Activated CD4-positive, alpha-beta T cell treated with anti-CD3 and anti-CD28 coated beads, Interleukin-2, amount 10 ng/mL, durations not matched to agents 24 days and 14 days (primary cell): ENCODE measurements at regions of chr15 and their contacts with region 1.

Region 1: GRCh38 chr15:64622410-64623260 is 152.8 kb downstream of the RBPMS2 start:
- DNase-seq: peak; percentile 87
- H3K4me3 Mint-ChIP-seq: peak overlapping the region; percentile 75
- H3K27ac Mint-ChIP-seq: peak overlapping the region; percentile 91
- H3K4me1 Mint-ChIP-seq: peaks cover 78% of the 10 kb centered on the region
- H3K27me3 Mint-ChIP-seq: no peaks in the 10 kb centered on the region

Region 2: GRCh38 chr15:64247906-64248541 is 374.6 kb before region 1 on chr15:
- intact Hi-C with region 1: loop called (anchors 10 kb)
- DNase-seq: peak; percentile 79
- H3K4me3 Mint-ChIP-seq: no peak overlapping the region
- H3K27ac Mint-ChIP-seq: peak overlapping the region; percentile 64
- H3K4me1 Mint-ChIP-seq: peaks cover 38% of the 10 kb centered on the region
- H3K27me3 Mint-ChIP-seq: no peaks in the 10 kb centered on the region

Region 3: GRCh38 chr15:64507293-64507802 is 115.3 kb before region 1 on chr15:
- intact Hi-C with region 1: loop called (anchors 5 kb)
- DNase-seq: peak; percentile 77
- H3K4me3 Mint-ChIP-seq: peak overlapping the region; percentile 18
- H3K27ac Mint-ChIP-seq: peak overlapping the region; percentile 67
- H3K4me1 Mint-ChIP-seq: peaks cover 55% of the 10 kb centered on the region
- H3K27me3 Mint-ChIP-seq: no peaks in the 10 kb centered on the region

Region 4: GRCh38 chr15:64582202-64582601 is 40.4 kb before region 1 on chr15:
- intact Hi-C with region 1: loop called (anchors 5 kb)
- DNase-seq: no peak
- H3K4me3 Mint-ChIP-seq: no peak overlapping the region
- H3K27ac Mint-ChIP-seq: no peak overlapping the region
- H3K4me1 Mint-ChIP-seq: peaks cover 27% of the 10 kb centered on the region
- H3K27me3 Mint-ChIP-seq: no peaks in the 10 kb centered on the region

Region 5: DNA sequence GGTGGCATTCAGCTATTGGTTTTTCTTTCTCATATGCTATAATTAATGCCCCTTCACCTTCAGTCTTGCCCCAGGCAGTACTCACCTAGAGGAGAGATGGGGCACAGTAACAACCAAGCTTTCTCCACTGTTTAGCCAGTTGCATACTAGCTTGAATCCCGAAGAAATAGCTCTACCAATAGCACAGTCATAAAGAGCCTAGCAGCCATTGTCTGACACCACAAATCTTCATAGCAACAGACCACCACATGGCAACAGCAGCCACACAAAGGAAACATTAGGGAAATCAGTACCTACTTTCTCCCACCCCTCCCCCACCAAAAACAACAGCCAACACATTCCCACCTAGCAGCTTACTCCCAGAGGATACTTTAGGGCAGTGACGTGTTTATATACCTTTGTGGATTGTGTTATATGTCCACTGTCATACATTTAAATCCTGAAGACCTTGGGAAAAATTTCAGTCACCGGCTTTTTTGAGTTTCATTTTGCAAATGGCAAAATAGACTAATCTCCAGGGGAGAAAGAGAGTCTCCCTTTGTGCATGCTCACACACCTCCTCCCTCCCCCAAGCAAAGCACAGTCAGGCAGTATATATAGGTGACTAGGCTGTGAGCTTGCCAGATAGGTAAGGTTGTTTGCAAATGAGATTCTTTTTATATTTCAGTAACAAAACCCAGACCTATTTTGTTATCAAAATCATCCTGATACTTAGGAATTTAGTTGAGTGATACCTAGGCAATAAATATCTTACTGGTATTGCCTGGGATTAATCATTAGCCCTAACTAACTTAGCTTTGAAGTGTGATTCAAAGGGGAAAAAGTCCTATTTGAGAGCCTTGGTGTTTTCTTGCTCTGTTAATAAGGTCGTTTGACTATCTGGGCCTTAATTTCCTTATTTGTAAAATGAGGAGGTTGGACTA is 12.2 kb after region 1 on chr15:
- intact Hi-C with region 1: loop called (anchors 1 kb)
- DNase-seq: peak; percentile 80
- H3K4me3 Mint-ChIP-seq: peak overlapping the region; percentile 59
- H3K27ac Mint-ChIP-seq: peak overlapping the region; percentile 84
- H3K4me1 Mint-ChIP-seq: peaks cover 48% of the 10 kb centered on the region
- H3K27me3 Mint-ChIP-seq: no peaks in the 10 kb centered on the region